Activated T-helper 2 cell treated with anti-CD3 and anti-CD28 coated beads, Interferon-gamma antibody, Interleukin-2, Interleukin-4, amounts not matched to agents 10 μg/mL and 5 μg/mL and 100 μg/mL, durations not matched to agents 14 hours and 24 hours and 36 hours (primary cell): ENCODE measurements at regions of chr5 and their contacts with region 1.

Region 1: DNA sequence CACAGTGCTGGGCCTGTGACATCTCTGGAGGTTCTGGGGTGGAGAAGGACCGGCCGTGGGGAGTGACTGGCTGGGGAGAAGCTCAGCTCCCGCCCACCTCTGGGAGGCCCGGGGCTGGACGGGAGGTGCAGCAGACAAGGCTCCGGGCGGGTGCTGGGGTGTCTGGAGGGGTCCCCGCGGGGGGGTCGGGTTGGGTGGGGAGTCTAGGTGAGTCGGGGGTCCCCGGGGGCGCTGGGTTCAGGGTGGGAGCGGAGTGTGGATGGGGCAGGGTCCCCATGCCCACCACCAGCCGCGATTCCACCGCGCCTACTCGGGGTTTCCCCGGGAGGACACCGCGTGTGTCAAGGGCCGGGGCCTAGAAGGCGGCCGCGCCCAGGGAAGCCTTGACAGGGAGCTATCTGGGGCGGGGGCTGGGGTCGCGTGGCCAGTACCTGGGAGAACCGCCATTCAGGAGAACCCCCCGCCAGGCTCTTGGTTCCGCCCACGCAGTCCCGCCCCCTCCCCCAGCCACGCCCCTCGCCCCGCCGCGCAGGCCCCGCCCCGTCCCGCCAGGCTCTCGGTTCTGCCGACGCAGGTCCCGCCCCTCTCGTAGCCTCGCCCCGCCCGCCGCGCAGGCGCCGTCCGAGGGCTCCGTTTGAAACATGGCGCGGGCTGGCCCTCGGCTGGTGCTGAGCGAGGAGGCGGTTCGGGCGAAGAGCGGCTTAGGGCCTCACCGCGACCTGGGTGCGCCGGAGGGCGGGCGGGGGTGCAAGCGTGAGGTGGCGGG is at the start of gene CEP72:
- DNase-seq: peak; percentile 87
- H3K4me3 Mint-ChIP-seq: peak within 1 kb of the TSS; percentile 92
- H3K27ac Mint-ChIP-seq: peak within 1 kb of the TSS; percentile 88
- H3K4me1 Mint-ChIP-seq: peaks cover 41% of the 10 kb centered on the region
- H3K27me3 Mint-ChIP-seq: no peaks in the 10 kb centered on the region
- total RNA-seq, gene CEP72: 29.6 and 30.2 TPM in 2 replicates

Region 2: DNA sequence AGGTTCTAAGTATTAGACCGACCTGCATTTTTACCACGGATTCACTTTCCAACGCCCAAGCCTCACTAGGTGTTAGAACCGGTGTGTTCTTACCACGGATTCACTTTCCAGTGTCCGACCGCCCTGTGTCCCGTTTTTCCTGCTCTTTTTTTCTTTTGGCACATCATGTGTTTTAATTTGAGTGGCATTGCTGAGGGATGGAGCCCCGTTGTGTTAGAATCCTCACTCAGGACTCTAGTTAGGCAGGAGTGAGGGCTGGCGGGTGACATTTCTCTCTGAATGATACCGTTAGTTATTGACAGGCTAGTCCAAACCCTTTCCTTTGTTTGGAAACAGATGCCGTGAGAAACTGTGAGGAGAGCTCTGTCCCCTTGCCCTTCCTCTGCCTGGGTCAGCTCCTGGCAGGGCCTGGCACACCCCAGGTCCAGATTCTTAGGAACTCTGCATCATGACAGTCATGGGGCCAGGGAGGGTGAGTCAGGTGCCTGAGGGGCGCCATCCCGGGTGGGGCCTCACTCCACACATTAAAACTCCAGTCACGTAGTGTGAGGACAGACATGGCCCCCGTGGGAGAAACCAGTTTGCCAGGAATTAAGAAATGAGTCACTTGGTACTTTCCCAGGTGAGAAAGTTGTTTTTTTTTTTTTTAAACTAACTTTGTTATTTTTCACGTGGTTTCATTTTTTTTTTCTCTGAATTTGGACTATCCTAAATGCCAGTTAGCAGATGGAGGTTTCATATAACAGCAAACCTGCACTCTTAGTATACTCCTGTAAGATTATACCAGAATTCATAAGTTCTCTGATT is 153.2 kb before region 1 on chr5:
- intact Hi-C with region 1: loop called (anchors 1 kb)
- DNase-seq: no peak
- H3K4me3 Mint-ChIP-seq: peak overlapping the region; percentile 59
- H3K27ac Mint-ChIP-seq: peak overlapping the region; percentile 98
- H3K4me1 Mint-ChIP-seq: peaks cover 46% of the 10 kb centered on the region
- H3K27me3 Mint-ChIP-seq: no peaks in the 10 kb centered on the region

Region 3: GRCh38 chr5:472656-473553 is 139.0 kb before region 1 on chr5:
- intact Hi-C with region 1: loop called (anchors 5 kb)
- DNase-seq: peak; percentile 82
- H3K4me3 Mint-ChIP-seq: peak overlapping the region; percentile 86
- H3K27ac Mint-ChIP-seq: peak overlapping the region; percentile 73
- H3K4me1 Mint-ChIP-seq: peaks cover 19% of the 10 kb centered on the region
- H3K27me3 Mint-ChIP-seq: peaks cover 5% of the 10 kb centered on the region

Region 4: DNA sequence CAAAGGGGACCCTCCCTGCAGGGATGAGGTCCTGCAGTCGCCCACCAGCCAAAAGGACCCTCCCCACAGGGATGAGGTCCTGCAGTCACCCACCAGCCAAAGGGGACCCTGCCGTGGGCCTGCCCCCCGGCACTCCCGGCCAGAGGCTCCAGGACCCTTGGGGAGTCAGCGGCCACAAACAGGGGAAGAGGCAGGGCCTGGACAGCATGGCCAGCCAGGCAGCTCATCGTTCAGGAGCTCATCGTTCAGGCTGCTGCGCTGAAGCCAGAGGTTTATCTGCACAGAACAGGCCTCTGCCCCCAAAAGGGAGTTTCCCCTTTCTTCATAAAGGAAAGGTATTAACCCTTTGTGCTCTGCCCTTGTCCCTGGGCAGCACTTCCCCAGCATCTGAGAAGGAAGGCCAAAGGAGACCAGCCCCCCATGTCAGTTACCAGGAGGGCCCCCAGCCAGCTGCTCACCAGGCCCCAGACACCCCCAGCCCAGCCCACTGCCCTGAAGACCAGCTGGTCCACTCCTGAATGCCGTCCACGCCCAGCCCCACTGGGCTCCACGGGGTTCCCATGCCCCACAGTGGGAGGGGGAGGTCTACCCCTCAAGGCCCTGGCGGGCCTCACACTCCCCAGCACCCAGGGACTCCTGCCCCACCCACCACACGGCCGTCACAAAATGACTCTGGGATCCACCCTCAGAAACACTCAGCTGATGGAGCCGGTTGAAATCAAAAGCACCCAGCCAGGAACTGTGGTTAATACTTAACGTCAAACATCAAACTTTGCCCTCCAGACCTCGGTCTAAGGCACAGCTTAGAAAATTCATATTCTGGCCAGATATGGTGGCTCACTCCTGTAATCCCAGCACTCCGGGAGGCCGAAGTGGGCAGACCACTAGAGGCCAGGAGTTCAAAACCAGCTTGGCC is 493.7 kb after region 1 on chr5:
- intact Hi-C with region 1: loop called (anchors 5 kb)
- DNase-seq: peak; percentile 79
- H3K4me3 Mint-ChIP-seq: peak overlapping the region; percentile 78
- H3K27ac Mint-ChIP-seq: peak overlapping the region; percentile 90
- H3K4me1 Mint-ChIP-seq: peaks cover 59% of the 10 kb centered on the region
- H3K27me3 Mint-ChIP-seq: no peaks in the 10 kb centered on the region